ENCODE measurements at regions of chr5 and their contacts with region 1.

Region 1: DNA sequence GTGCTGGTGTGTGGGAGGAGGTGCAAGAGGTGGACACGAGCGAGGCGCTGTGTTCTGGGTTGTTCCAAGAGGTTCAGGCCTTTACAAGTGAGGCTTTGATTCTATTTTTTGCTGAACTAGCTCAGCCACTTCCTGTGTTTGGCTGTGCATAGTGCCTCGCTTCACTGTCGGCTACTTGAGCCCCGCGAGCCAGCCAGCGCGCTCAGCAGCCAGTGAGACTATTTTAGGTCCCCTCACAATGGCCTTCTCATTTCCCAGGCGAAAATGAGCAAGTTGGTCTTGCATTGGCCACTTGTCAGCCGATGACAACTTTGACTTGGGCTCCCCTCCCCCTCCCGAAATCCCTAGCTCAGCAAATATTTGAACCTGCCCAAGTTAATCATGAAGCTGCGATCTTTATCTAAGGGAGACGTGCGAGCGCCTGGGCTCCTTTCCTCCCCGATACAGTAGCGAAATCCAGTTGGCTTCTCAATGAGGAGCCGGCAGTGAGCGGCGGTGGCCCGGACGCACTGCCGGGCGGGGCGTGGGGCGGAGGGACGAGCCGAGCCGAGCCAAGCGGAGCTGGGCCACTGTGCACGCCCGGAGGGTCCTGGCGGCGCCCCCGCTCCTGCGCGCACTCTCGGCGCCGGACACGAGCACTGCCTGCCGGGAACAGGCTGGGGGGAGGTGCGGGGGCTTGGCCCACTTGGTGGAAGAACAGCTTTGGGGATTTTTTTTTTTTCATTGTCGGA is 72.6 kb downstream of the PIK3R1 start:
- DNase-seq: peak; percentile 76
- ATAC-seq: peak; percentile 89
- H3K4me3 Mint-ChIP-seq: peak overlapping the region; percentile 84
- H3K27ac Mint-ChIP-seq: peak overlapping the region; percentile 96
- H3K4me1 Mint-ChIP-seq: peaks cover 78% of the 10 kb centered on the region
- H3K27me3 Mint-ChIP-seq: no peaks in the 10 kb centered on the region

Region 2: GRCh38 chr5:67353500-67354450 is 934.4 kb before region 1 on chr5:
- CTCF ChIA-PET with region 1: no interaction called
- POLR2A ChIA-PET with region 1: no interaction called
- DNase-seq: no peak
- ATAC-seq: no peak
- H3K4me3 Mint-ChIP-seq: no peak overlapping the region
- H3K27ac Mint-ChIP-seq: no peak overlapping the region
- H3K4me1 Mint-ChIP-seq: peaks cover 12% of the 10 kb centered on the region
- H3K27me3 Mint-ChIP-seq: peaks cover 4% of the 10 kb centered on the region

Region 3: GRCh38 chr5:68252673-68253623 is 35.2 kb before region 1 on chr5:
- CTCF ChIA-PET with region 1: interaction called, 13 read pairs
- POLR2A ChIA-PET with region 1: no interaction called
- DNase-seq: peak; percentile 54
- ATAC-seq: peak; percentile 40
- H3K4me3 Mint-ChIP-seq: no peak overlapping the region
- H3K27ac Mint-ChIP-seq: no peak overlapping the region
- H3K4me1 Mint-ChIP-seq: peaks cover 76% of the 10 kb centered on the region
- H3K27me3 Mint-ChIP-seq: no peaks in the 10 kb centered on the region

Region 4: DNA sequence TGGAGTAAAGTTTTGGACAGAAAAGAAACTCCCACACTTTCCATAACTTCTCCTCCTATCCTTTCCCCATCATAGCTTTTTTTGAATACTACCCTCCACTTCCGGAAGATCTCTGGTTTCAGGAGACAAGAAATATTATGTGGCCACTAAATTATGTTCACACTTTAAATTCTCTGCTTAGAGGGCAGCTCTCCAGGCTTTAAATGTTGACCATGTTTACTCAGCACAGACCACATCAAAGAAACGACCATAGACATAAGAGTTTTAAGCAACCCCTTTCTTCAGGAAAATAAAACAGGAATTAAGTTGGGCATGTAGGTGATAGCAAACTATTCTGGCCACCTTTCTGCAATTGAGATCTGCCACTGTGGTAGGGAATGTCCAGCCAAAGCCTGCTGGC is 25.2 kb after region 1 on chr5:
- CTCF ChIA-PET with region 1: interaction called, 15 read pairs
- POLR2A ChIA-PET with region 1: no interaction called
- DNase-seq: no peak
- ATAC-seq: no peak
- H3K4me3 Mint-ChIP-seq: no peak overlapping the region
- H3K27ac Mint-ChIP-seq: no peak overlapping the region
- H3K4me1 Mint-ChIP-seq: peaks cover 16% of the 10 kb centered on the region
- H3K27me3 Mint-ChIP-seq: peaks cover 5% of the 10 kb centered on the region

Region 5: GRCh38 chr5:68424799-68425537 is 136.8 kb after region 1 on chr5:
- CTCF ChIA-PET with region 1: interaction called, 13 read pairs
- POLR2A ChIA-PET with region 1: interaction called, 4 read pairs
- DNase-seq: peak; percentile 62
- ATAC-seq: peak; percentile 91
- H3K4me3 Mint-ChIP-seq: no peak overlapping the region
- H3K27ac Mint-ChIP-seq: peak overlapping the region; percentile 71
- H3K4me1 Mint-ChIP-seq: peaks cover 40% of the 10 kb centered on the region
- H3K27me3 Mint-ChIP-seq: no peaks in the 10 kb centered on the region

Region 6: GRCh38 chr5:68446487-68446894 is 158.3 kb after region 1 on chr5:
- CTCF ChIA-PET with region 1: interaction called, 20 read pairs
- POLR2A ChIA-PET with region 1: no interaction called
- DNase-seq: no peak
- ATAC-seq: no peak
- H3K4me3 Mint-ChIP-seq: no peak overlapping the region
- H3K27ac Mint-ChIP-seq: no peak overlapping the region
- H3K4me1 Mint-ChIP-seq: peaks cover 28% of the 10 kb centered on the region
- H3K27me3 Mint-ChIP-seq: peaks cover 7% of the 10 kb centered on the region

Region 7: DNA sequence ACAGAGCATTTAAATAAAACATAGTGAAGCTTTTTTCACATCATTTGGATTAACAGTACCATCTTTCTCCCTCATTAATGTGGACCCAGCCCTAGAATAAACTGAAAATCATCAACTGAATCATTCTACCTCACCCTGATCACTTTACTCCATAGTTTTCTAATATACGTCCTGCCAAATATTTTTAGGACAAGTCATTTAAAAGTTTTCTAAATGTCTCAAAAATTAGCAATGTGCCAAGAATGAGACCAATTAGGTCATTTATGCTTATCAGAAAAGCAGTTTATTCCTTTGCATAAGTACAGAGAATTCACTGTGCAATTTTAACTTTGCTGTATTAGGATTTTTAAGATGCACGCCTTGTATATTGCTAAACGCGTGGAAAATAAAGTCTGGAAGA is 211.8 kb after region 1 on chr5:
- CTCF ChIA-PET with region 1: no interaction called
- POLR2A ChIA-PET with region 1: no interaction called
- DNase-seq: no peak
- ATAC-seq: no peak
- H3K4me3 Mint-ChIP-seq: no peak overlapping the region
- H3K27ac Mint-ChIP-seq: no peak overlapping the region
- H3K4me1 Mint-ChIP-seq: no peaks in the 10 kb centered on the region
- H3K27me3 Mint-ChIP-seq: no peaks in the 10 kb centered on the region

Region 8: GRCh38 chr5:69007726-69008368 is 719.7 kb after region 1 on chr5:
- CTCF ChIA-PET with region 1: interaction called, 11 read pairs
- POLR2A ChIA-PET with region 1: no interaction called
- DNase-seq: peak; percentile 80
- ATAC-seq: peak; percentile 86
- H3K4me3 Mint-ChIP-seq: no peak overlapping the region
- H3K27ac Mint-ChIP-seq: no peak overlapping the region
- H3K4me1 Mint-ChIP-seq: no peaks in the 10 kb centered on the region
- H3K27me3 Mint-ChIP-seq: peaks cover 27% of the 10 kb centered on the region

Measured in activated CD8-positive, alpha-beta T cell treated with anti-CD3 and anti-CD28 coated beads, Interleukin-2, amount 10 ng/mL, durations not matched to agents 7 days and 5 days (primary cell).